Transverse colon (tissue), 4 donors: ENCODE measurements at regions of chr10 and their contacts with region 1.

Region 1: DNA sequence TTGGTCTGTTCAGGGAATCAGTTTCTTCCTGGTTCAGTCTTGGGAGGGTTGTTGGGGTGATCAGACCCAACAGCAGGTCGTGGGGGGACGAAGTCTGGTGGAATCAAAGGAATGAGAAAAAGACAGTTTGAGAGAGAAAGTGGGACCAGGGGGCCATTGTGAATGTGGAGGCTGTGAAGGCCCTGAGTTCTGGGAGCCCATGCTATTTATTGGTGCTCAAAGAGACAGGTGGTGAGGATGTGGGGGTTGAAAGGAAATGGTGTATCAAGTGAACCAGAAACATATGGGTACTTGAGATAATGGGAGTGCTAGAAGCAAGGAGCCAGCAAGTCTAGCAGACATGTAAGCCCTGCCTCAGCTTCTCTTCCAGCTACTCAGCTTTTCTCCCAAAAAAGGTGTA is 84.1 kb downstream of the CCSER2 start:
- DNase-seq: no peak
- H3K4me3 ChIP-seq: no peak overlapping the region
- H3K27ac ChIP-seq: no peak overlapping the region
- H3K4me1 ChIP-seq: peaks cover 0 to 19% (median 0%) of the 10 kb centered on the region in 4 donors
- H3K27me3 ChIP-seq: no peaks in the 10 kb centered on the region
- CTCF ChIP-seq: no peak
- EP300 ChIP-seq: no peak
- POLR2A ChIP-seq: no peak

Region 2: DNA sequence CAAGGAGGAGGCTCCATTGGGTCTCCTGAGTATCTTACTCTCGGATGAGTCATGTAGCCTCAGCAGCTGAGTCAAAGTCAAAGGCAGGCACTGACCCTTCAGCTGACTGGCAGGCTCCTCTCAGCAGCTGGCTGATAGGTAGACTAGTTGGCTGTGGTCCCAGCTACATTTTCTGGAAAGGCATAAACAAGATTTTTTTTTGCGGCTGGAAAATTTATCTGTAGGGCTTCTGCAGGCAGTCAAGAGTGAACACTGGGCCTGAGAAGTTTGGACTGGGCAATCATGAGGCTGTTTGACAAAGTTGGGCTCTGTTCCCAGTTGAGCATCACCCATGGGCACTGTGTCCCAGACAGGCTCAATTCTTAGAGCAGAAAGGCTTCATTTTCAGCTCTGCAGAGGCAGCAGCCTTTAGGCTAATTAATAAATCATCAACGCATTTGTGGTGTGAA is 712.1 kb after region 1 on chr10:
- in situ Hi-C with region 1: no loop called
- intact Hi-C with region 1: loop called (anchors 5 kb)
- DNase-seq: no peak
- H3K4me3 ChIP-seq: no peak overlapping the region
- H3K27ac ChIP-seq: no peak overlapping the region
- H3K4me1 ChIP-seq: no peaks in the 10 kb centered on the region
- H3K27me3 ChIP-seq: no peaks in the 10 kb centered on the region
- CTCF ChIP-seq: no peak
- EP300 ChIP-seq: no peak
- POLR2A ChIP-seq: no peak